PC-3 (cell line): ENCODE measurements at regions of chr6 and their contacts with region 1.

Region 1: DNA sequence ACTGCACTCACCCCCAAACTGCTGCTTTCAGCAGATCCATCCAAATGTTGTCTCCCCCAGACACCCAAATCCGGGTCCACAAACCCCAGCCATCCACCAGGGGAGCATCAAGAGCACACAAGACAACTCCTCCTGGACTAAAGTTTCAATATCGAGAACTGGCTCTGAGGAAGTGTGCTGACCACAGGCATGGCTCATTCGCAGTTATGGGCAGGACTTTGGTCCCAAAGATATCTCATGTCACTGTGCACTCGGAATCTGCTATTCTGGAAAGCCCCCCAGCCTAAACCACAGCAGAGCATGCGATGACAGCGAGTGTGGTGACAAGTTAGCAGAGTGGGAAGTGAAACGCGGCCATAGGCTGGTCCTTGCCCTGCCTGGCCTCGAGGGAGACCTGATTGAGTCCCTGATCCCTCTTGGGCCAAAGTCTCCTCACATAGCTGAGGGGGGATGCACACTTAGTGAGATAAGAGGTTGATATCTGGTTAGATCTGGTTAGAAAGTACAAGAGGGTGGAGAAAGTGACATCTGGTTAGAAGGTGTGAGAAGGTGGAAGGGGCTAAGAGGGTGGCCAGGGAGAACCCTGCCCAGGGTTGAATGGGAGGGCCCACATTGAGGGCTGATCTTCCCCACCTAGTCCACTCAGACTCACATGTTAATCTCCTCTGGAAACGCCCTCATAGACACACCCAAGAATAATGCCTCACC is 149.7 kb downstream of the MRPL14 start:
- DNase-seq: no peak
- ATAC-seq: no peak
- H3K4me3 ChIP-seq: no peak overlapping the region
- H3K27ac ChIP-seq: no peak overlapping the region
- H3K4me1 ChIP-seq: peaks cover 50% of the 10 kb centered on the region
- H3K27me3 ChIP-seq: no peaks in the 10 kb centered on the region
- CTCF ChIP-seq: no peak

Region 2: GRCh38 chr6:43575772-43576551 is 401.6 kb before region 1 on chr6 and contains the starts of genes POLH and XPO5:
- CTCF ChIA-PET with region 1: no interaction called
- POLR2A ChIA-PET with region 1: no interaction called
- intact Hi-C with region 1: no loop called
- DNase-seq: peak; percentile 96
- ATAC-seq: peak; percentile 97
- H3K4me3 ChIP-seq: peak within 1 kb of the TSS; percentile 81
- H3K27ac ChIP-seq: peak within 1 kb of the TSS; percentile 31
- H3K4me1 ChIP-seq: peaks cover 17% of the 10 kb centered on the region
- H3K27me3 ChIP-seq: no peaks in the 10 kb centered on the region
- CTCF ChIP-seq: peak; percentile 34; the same call in 1 of the 2 replicates
- total RNA-seq, gene POLH: 8.2 and 12.1 TPM in 2 replicates
- total RNA-seq, gene XPO5: 42.3 and 50.6 TPM in 2 replicates

Region 3: GRCh38 chr6:43996618-43997344 is 19.2 kb after region 1 on chr6:
- CTCF ChIA-PET with region 1: no interaction called
- POLR2A ChIA-PET with region 1: interaction called, 26 read pairs
- intact Hi-C with region 1: no loop called
- DNase-seq: no peak
- ATAC-seq: no peak
- H3K4me3 ChIP-seq: no peak overlapping the region
- H3K27ac ChIP-seq: no peak overlapping the region
- H3K4me1 ChIP-seq: peaks cover 11% of the 10 kb centered on the region
- H3K27me3 ChIP-seq: no peaks in the 10 kb centered on the region
- CTCF ChIP-seq: no peak

Region 4: GRCh38 chr6:44010411-44011349 is 33.1 kb after region 1 on chr6:
- CTCF ChIA-PET with region 1: no interaction called
- POLR2A ChIA-PET with region 1: no interaction called
- intact Hi-C with region 1: loop called (anchors 5 kb)
- DNase-seq: peak; percentile 91
- ATAC-seq: peak; percentile 93
- H3K4me3 ChIP-seq: no peak overlapping the region
- H3K27ac ChIP-seq: peak overlapping the region; percentile 89
- H3K4me1 ChIP-seq: peaks cover 26% of the 10 kb centered on the region
- H3K27me3 ChIP-seq: no peaks in the 10 kb centered on the region
- CTCF ChIP-seq: no peak

Region 5: GRCh38 chr6:44058617-44059358 is 81.2 kb after region 1 on chr6:
- CTCF ChIA-PET with region 1: interaction called, 9 read pairs
- POLR2A ChIA-PET with region 1: no interaction called
- intact Hi-C with region 1: loop called (anchors 5 kb)
- DNase-seq: peak; percentile 98
- ATAC-seq: peak; percentile 87
- H3K4me3 ChIP-seq: no peak overlapping the region
- H3K27ac ChIP-seq: peak overlapping the region; percentile 97
- H3K4me1 ChIP-seq: peaks cover 57% of the 10 kb centered on the region
- H3K27me3 ChIP-seq: no peaks in the 10 kb centered on the region
- CTCF ChIP-seq: no peak